ENCODE measurements at regions of chr3 and their contacts with region 1.

Region 1: DNA sequence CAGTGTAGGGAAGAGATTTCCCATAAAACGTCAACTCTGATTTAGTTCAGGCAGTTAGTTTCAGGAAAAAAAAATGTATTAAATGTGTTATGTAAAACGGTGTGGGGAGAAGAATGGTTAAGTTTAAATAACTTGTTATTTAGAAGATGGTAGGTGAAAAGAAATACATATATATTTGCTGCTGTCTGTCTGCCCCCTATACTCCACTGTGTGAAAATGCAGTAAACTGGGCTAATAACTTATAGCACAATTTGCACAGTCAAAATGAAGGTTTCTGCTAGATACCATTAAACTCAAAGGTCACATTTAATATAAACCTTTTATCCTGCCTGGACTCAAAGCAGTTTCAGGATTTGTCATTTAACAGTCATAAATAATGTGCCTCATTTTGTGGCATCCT is 515.0 kb downstream of the FGF12 start:
- DNase-seq: no peak
- ATAC-seq: no peak
- H3K4me3 Mint-ChIP-seq: no peak overlapping the region
- H3K27ac Mint-ChIP-seq: no peak overlapping the region
- H3K4me1 Mint-ChIP-seq: no peaks in the 10 kb centered on the region
- H3K27me3 Mint-ChIP-seq: peaks cover 5% of the 10 kb centered on the region
- CTCF ChIP-seq: no peak

Region 2: DNA sequence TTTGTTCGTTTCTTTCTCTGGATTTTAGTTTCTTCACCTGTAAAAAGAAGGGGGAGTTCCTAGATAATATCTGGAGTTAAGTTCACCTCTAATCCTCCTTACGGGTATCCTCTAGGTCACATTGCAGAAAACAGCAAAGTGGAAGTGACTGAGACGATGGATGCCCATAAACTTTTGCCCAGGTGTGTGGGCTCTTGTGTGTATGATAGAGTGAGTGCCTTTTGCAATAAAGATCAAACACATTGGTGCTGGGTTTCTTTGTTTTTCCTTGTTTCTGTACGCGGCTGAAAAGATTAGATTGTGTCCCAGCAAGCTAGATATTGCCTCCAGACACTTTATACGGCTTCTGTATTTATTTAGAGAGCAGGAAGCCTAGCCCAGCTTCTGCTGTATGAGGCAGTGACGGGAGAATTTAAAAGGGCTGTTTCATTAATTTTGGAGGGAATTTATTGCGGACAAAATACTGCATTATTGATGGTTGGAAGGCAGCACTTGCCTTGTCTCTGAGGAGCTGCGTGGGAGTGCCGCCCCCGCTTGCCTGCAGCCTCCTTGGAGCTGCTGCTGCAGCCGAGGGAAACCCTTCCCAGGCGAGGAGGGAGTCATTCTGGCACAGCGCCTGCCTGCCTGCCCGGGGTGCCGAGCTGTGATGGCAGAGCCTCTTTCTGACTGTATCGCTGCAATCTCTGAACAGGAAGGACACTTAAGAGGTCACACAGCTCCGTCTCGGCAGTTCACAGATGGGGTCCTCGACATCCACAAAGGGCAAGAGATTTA is 712.8 kb before region 1 on chr3:
- CTCF ChIA-PET with region 1: no interaction called
- POLR2A ChIA-PET with region 1: no interaction called
- intact Hi-C with region 1: loop called (anchors 10 kb)
- DNase-seq: no peak
- ATAC-seq: no peak
- H3K4me3 Mint-ChIP-seq: no peak overlapping the region
- H3K27ac Mint-ChIP-seq: no peak overlapping the region
- H3K4me1 Mint-ChIP-seq: no peaks in the 10 kb centered on the region
- H3K27me3 Mint-ChIP-seq: peaks cover 12% of the 10 kb centered on the region
- CTCF ChIP-seq: no peak

Region 3: DNA sequence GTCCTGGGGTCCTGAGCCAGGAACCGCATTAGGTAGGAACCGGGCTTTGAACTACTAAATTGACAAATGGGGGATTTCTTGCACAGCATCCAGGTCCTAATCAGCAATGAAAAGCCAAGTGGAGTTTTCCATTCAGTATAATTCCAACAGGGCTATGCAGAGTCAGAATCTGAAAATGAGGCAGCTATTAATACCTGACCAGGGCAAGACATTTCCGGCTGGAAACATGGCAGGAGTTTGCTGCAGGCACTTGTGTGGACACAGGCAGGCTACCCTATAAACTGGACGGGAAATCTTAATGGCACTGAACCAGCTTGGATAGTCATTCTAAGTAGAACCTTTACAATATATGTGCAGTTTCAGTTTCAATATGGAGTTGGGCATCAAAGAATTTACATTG is 38.1 kb before region 1 on chr3:
- CTCF ChIA-PET with region 1: no interaction called
- POLR2A ChIA-PET with region 1: no interaction called
- intact Hi-C with region 1: no loop called
- DNase-seq: no peak
- ATAC-seq: no peak
- H3K4me3 Mint-ChIP-seq: no peak overlapping the region
- H3K27ac Mint-ChIP-seq: no peak overlapping the region
- H3K4me1 Mint-ChIP-seq: no peaks in the 10 kb centered on the region
- H3K27me3 Mint-ChIP-seq: no peaks in the 10 kb centered on the region
- CTCF ChIP-seq: no peak

Region 4: GRCh38 chr3:192543163-192543562 is 330.8 kb after region 1 on chr3:
- CTCF ChIA-PET with region 1: no interaction called
- POLR2A ChIA-PET with region 1: no interaction called
- intact Hi-C with region 1: no loop called
- DNase-seq: no peak
- ATAC-seq: no peak
- H3K4me3 Mint-ChIP-seq: no peak overlapping the region
- H3K27ac Mint-ChIP-seq: no peak overlapping the region
- H3K4me1 Mint-ChIP-seq: peaks cover 5% of the 10 kb centered on the region
- H3K27me3 Mint-ChIP-seq: peaks cover 10% of the 10 kb centered on the region
- CTCF ChIP-seq: no peak